A673 (cell line): ENCODE measurements at regions of chr10 and their contacts with region 1.

Region 1: GRCh38 chr10:61059636-61060035 is 115.7 kb upstream of the RHOBTB1 start:
- DNase-seq: no peak
- H3K4me3 ChIP-seq: no peak overlapping the region
- H3K27ac ChIP-seq: no peak overlapping the region
- H3K4me1 ChIP-seq: no peaks in the 10 kb centered on the region
- H3K27me3 ChIP-seq: no peaks in the 10 kb centered on the region
- CTCF ChIP-seq: no peak

Region 2: GRCh38 chr10:60778214-60779029 is 281.2 kb before region 1 on chr10 and contains the start of gene CDK1:
- CTCF ChIA-PET with region 1: no interaction called
- POLR2A ChIA-PET with region 1: no interaction called
- intact Hi-C with region 1: no loop called
- DNase-seq: peak; percentile 100
- H3K4me3 ChIP-seq: peak within 1 kb of the TSS; percentile 86
- H3K27ac ChIP-seq: peak within 1 kb of the TSS; percentile 94
- H3K4me1 ChIP-seq: peaks cover 24% of the 10 kb centered on the region
- H3K27me3 ChIP-seq: no peaks in the 10 kb centered on the region
- CTCF ChIP-seq: no peak
- total RNA-seq, gene CDK1: 153 and 168 TPM in 2 replicates

Region 3: DNA sequence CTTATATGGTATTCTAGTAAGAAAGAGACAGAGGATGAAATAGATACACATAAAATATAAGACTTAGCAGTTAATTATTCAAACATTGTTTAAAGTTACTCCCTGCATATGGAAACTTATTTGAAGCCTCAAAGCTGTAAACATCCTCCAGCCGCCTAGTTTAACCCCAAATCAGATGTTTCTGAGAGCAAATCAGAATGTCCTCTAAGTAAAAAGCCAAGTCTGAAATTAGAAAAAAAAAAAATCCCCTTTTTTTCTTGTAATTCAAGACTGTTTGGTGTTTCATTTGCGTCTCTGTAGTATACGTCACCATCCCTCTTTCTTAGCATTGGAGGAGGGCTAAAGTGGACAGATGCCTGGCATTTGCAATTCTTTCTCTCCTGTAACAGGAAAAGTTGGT is 347.1 kb after region 1 on chr10:
- CTCF ChIA-PET with region 1: no interaction called
- POLR2A ChIA-PET with region 1: interaction called, 14 read pairs
- intact Hi-C with region 1: no loop called
- DNase-seq: no peak
- H3K4me3 ChIP-seq: no peak overlapping the region
- H3K27ac ChIP-seq: no peak overlapping the region
- H3K4me1 ChIP-seq: peaks cover 3% of the 10 kb centered on the region
- H3K27me3 ChIP-seq: no peaks in the 10 kb centered on the region
- CTCF ChIP-seq: no peak